Activated naive CD4-positive, alpha-beta T cell treated with anti-CD3 and anti-CD28 coated beads for 36 hours (primary cell): ENCODE measurements at regions of chr19 and their contacts with region 1.

Region 1: GRCh38 chr19:4246767-4247593 is at the start of gene YJU2:
- DNase-seq: peak; percentile 100
- H3K4me3 Mint-ChIP-seq: peak within 1 kb of the TSS; percentile 80
- H3K27ac Mint-ChIP-seq: peak within 1 kb of the TSS; percentile 95
- H3K4me1 Mint-ChIP-seq: peaks cover 22% of the 10 kb centered on the region
- H3K27me3 Mint-ChIP-seq: no peaks in the 10 kb centered on the region
- total RNA-seq, gene YJU2: 28.5 to 29.8 TPM

Region 2: GRCh38 chr19:4229179-4229931 is 17.6 kb before region 1 on chr19 and contains the start of gene EBI3:
- CTCF ChIA-PET with region 1: interaction called, 7 read pairs
- intact Hi-C with region 1: loop called (anchors 1 kb)
- DNase-seq: peak; percentile 90
- H3K4me3 Mint-ChIP-seq: no peak within 1 kb of the TSS
- H3K27ac Mint-ChIP-seq: peak within 1 kb of the TSS; percentile 60
- H3K4me1 Mint-ChIP-seq: peaks cover 7% of the 10 kb centered on the region
- H3K27me3 Mint-ChIP-seq: peaks cover 6% of the 10 kb centered on the region
- total RNA-seq, gene EBI3: 7.8 to 11.8 TPM

Region 3: DNA sequence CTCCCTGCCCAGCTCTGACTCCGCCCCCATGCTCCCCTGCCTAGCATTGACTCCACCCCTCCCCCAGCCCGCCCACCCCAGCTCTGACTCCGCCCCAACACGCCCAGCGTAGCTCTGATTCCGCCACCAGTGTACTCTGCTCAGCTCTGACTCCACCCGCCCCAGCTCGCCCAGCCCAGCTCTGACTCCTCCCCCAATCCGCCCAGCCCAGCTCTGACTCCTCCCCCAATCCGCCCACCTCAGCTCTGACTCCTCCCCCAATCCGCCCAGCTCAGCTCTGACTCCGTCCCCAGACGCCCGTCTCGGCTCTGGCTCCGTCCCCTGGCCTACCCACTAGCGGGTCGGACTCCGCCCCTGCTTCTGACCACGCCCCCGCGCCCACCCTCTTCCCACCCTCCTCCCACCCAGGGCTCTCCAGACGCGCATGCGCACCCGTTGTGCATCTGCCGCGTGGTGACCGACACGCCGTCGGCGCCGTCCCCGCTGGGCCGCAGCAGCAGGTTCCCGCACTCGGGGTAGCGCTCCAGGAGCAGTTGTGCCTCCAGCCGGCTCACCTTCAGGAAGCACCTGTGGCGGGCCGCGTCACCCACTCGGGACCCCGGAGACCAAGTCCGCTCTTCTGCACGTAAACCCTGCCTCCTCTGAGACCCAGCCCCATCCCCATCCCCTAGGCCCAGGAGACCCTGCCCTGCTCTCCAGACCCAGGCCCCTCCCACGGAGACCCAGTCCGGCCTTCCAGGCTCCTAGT is 81.4 kb after region 1 on chr19:
- CTCF ChIA-PET with region 1: no interaction called
- intact Hi-C with region 1: loop called (anchors 1 kb)
- DNase-seq: peak; percentile 97
- H3K4me3 Mint-ChIP-seq: peak overlapping the region; percentile 87
- H3K27ac Mint-ChIP-seq: peak overlapping the region; percentile 84
- H3K4me1 Mint-ChIP-seq: peaks cover 27% of the 10 kb centered on the region
- H3K27me3 Mint-ChIP-seq: no peaks in the 10 kb centered on the region

Region 4: GRCh38 chr19:4400135-4400936 is 153.4 kb after region 1 on chr19 and contains the start of gene SH3GL1:
- CTCF ChIA-PET with region 1: interaction called, 4 read pairs
- intact Hi-C with region 1: loop called (anchors 1 kb)
- DNase-seq: peak; percentile 94
- H3K4me3 Mint-ChIP-seq: peak within 1 kb of the TSS; percentile 94
- H3K27ac Mint-ChIP-seq: peak within 1 kb of the TSS; percentile 93
- H3K4me1 Mint-ChIP-seq: peaks cover 73% of the 10 kb centered on the region
- H3K27me3 Mint-ChIP-seq: no peaks in the 10 kb centered on the region
- total RNA-seq, gene SH3GL1: 31.7 to 32.1 TPM